BJ (cell line): ENCODE measurements at regions of chr12 and their contacts with region 1.

Region 1: GRCh38 chr12:49296034-49296835 is 1.3 kb downstream of the PRPH start:
- DNase-seq: no peak
- H3K4me3 ChIP-seq: no peak overlapping the region
- H3K27me3 ChIP-seq: peaks cover 48% of the 10 kb centered on the region
- CTCF ChIP-seq: peak; percentile 74

Region 2: DNA sequence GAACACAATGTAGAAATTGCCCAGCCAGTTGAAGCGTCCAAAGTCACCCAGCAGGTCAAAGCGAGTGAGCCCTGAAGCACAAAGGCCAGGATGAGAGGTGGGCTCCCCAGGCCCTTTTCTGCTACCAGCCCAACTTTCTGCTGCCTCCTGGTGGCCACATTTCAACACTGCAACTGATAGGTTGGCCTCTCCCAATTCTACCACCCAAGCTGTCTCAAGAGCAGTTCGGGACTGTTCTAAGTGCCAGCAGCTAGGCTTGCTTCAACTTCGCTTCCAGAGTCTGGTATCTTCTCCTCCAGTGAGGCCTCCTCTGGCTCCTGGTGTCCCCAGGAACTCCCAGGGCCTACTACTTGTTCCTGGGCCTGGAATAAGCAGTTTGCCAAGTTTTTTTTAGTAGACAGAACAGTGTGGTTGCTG is 198.2 kb before region 1 on chr12:
- CTCF ChIA-PET with region 1: no interaction called
- POLR2A ChIA-PET with region 1: no interaction called
- DNase-seq: no peak
- H3K4me3 ChIP-seq: no peak overlapping the region
- H3K27me3 ChIP-seq: peaks cover 8% of the 10 kb centered on the region
- CTCF ChIP-seq: peak; percentile 85

Region 3: GRCh38 chr12:49264738-49265515 is 31.3 kb before region 1 on chr12 and contains the start of gene TUBA1C:
- CTCF ChIA-PET with region 1: interaction called, 12 read pairs
- POLR2A ChIA-PET with region 1: no interaction called
- DNase-seq: peak; percentile 62
- H3K4me3 ChIP-seq: peak within 1 kb of the TSS; percentile 92
- H3K27me3 ChIP-seq: no peaks in the 10 kb centered on the region
- CTCF ChIP-seq: no peak
- polyA plus RNA-seq, gene TUBA1C: 1,365 and 2,194 TPM in 2 replicates

Region 4: DNA sequence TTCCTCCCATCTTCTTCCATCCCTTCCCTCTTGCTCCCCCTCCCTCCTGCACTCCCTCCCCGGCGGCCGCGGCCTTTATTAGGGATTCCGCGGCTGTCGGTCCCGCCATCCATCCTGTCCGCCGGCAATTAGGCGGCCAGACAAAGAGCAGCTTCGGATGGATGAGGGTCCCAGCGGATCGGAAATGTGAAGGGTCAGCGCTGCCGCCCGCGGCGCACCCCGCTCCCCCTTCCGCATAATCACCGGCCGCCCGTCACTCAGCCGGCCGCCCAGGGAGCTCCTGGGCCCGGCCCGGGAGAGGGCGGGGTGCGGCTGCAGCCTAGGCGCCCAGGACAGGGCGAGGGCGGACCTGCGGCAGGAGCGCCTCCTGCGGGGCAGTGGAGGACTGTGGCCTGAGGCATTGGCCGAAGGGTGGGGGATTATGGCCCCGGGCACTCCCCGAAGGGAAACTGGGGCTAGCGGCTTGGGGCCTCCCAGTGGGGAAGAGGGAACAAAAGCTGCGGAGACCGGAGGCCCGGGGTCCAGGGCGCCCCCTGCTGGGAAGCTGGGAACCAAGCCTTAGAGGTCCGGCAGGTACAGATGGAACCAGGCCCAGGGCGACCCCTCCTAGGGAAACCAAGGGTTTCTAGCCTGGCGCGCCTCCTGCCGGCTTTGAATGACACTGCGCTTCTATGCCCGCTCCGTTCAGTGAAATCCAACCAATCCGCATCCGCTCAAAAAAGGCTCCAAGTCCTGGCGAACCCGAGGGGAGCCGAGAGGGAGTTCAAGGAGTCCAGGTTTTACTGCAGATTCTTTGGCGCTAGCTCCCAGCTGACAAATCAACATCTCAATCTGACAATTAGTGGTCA is 46.1 kb after region 1 on chr12:
- CTCF ChIA-PET with region 1: interaction called, 39 read pairs
- POLR2A ChIA-PET with region 1: no interaction called
- DNase-seq: no peak
- H3K4me3 ChIP-seq: peak overlapping the region; percentile 29
- H3K27me3 ChIP-seq: peaks cover 60% of the 10 kb centered on the region
- CTCF ChIP-seq: peak; percentile 86

Region 5: DNA sequence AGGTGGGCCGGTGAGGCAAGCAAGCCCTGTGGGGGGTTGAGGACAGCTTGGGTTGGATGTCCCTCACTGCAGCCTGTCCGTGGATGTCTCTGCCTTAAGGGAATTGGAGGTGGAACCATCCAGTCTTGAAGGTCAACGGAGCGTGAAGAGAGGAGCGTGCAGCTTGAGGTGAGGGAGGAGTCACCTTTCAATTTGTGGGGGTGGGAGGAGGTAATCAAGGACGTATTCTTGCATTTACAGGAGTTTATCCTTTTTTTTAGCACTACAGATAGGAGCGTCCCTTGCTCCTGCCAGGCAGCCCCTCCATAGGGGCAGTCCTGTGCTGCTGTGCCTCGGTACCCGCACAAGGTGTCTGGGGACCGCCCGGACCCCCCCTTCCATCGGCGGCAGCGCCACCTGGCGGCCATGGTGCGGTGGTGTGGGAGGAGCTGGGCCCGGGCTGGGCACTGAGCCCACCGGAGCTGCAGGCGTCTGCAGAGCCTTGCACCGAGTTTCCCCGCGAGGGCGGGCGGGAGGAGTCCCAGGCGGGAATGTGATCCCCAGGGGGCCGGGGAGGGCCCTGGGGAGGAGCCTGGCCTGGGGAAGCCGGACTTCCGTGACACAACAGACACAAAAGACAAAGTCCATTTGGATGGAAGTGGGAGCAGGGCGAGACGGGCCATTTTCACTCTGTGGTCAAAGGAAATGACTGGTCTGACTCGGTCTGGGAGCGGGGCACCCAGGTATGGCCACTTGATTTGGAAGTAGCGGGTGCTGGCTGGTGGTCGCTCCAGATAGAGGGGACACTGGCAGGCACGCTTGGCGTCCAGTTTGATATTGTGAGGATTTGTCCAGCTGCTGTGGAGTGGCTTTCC is 51.4 kb after region 1 on chr12:
- CTCF ChIA-PET with region 1: interaction called, 39 read pairs
- POLR2A ChIA-PET with region 1: no interaction called
- DNase-seq: no peak
- H3K4me3 ChIP-seq: peak overlapping the region; percentile 31
- H3K27me3 ChIP-seq: peaks cover 34% of the 10 kb centered on the region
- CTCF ChIP-seq: peak; percentile 95